ENCODE measurements at regions of chr21 and their contacts with region 1.

Region 1: GRCh38 chr21:44801468-44802395 is at the start of gene UBE2G2:
- DNase-seq: peak; percentile 81 to 91 (median 88)
- H3K4me3 ChIP-seq: peak within 1 kb of the TSS; percentile 48 to 84
- H3K4me3 Mint-ChIP-seq: peak within 1 kb of the TSS; percentile 95 to 100 (median 98)
- H3K27ac ChIP-seq: peak within 1 kb of the TSS; percentile 57
- H3K27ac Mint-ChIP-seq: peak within 1 kb of the TSS; percentile 88 to 99 (median 98)
- H3K4me1 ChIP-seq: peaks cover 30% of the 10 kb centered on the region
- H3K4me1 Mint-ChIP-seq: peaks cover 31 to 49% (median 42%) of the 10 kb centered on the region in 4 donors
- H3K27me3 ChIP-seq: no peaks in the 10 kb centered on the region
- H3K27me3 Mint-ChIP-seq: no peaks in the 10 kb centered on the region
- total RNA-seq, gene UBE2G2: 125 to 131 TPM

Region 2: DNA sequence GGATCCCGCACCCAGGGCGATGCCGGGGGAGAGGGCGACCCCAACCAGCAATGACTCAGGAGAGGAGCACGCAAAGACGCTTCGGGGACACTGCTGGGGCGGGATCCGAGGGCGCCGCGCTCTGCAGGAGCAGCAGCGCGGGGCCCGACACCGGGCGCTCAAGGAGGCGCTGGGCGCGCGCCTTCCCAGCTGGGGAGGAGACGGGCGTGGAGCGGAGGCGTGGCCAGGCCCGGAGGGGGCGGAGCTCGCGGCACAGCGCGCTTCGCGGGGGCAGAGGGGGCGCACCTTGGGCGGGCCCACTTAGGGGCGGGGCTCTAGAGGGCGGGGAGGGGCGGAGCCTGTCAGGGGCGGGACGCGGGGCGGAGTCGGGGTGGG is 15.8 kb after region 1 on chr21:
- CTCF ChIA-PET with region 1: interaction called, 25 read pairs
- POLR2A ChIA-PET with region 1: interaction called, 14 read pairs
- intact Hi-C with region 1: loop called (anchors 1 kb)
- DNase-seq: peak; percentile 89 to 91 (median 91)
- H3K4me3 ChIP-seq: peak overlapping the region in 1 of 2 donors; percentile 57
- H3K4me3 Mint-ChIP-seq: peak overlapping the region; percentile 23 to 80 (median 58)
- H3K27ac ChIP-seq: no peak overlapping the region
- H3K27ac Mint-ChIP-seq: peak overlapping the region in 3 of 7 donors; percentile 17 to 48 (median 31)
- H3K4me1 ChIP-seq: peaks cover 16% of the 10 kb centered on the region
- H3K4me1 Mint-ChIP-seq: peaks cover 1 to 34% (median 16%) of the 10 kb centered on the region in 4 donors
- H3K27me3 ChIP-seq: no peaks in the 10 kb centered on the region
- H3K27me3 Mint-ChIP-seq: no peaks in the 10 kb centered on the region

Region 3: DNA sequence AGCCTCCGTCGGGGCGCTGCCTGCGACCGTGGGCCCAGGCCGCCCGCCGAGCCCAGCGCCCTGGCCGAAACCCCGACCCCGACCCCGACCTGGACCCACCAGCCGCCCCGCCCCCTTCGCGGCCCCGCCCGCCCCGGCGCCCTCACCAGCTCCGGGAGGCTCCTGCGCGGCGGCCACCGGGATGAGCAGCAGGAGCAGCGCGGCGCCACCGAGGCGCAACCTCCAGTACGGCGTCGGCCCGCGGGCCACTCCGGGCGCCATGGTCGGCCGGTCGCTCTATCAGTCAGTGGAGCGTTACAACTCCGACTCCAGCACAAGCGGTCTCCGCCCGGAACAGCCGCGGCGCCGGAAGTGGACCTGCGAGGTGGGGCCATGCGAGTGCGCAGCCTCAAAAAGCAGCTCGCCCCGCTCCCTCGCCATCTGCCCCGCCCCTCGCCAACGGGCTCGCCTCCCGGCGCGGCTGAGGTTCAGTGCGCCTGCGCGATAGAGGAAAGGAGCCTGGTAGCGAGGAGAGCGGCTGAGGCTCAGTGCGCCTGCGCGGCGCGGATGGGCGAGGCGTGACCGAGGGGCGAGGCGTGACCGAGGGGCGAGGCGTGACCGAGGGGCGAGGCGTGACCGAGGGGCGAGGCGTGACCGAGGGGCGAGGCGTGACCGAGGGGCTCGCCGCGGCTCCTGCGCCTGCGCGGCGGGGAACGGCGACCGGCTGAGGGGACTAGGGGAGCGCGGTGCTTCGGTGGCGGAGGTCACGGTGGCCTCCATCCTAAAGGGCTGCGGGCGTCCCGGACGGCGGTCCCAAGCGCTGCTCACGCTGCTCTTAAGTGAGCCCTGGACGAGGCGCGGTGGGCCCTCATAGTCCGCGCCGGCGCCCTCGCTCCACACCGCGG is 71.9 kb after region 1 on chr21 and contains the start of gene PTTG1IP:
- CTCF ChIA-PET with region 1: interaction called, 82 read pairs
- POLR2A ChIA-PET with region 1: interaction called, 82 read pairs
- intact Hi-C with region 1: loop called (anchors 1 kb)
- DNase-seq: peak; percentile 98 to 99 (median 99)
- H3K4me3 ChIP-seq: peak within 1 kb of the TSS; percentile 67 to 70
- H3K4me3 Mint-ChIP-seq: peak within 1 kb of the TSS; percentile 92 to 97 (median 95)
- H3K27ac ChIP-seq: peak within 1 kb of the TSS; percentile 76
- H3K27ac Mint-ChIP-seq: peak within 1 kb of the TSS; percentile 92 to 98 (median 97)
- H3K4me1 ChIP-seq: peaks cover 55% of the 10 kb centered on the region
- H3K4me1 Mint-ChIP-seq: peaks cover 37 to 59% (median 48%) of the 10 kb centered on the region in 4 donors
- H3K27me3 ChIP-seq: no peaks in the 10 kb centered on the region
- H3K27me3 Mint-ChIP-seq: no peaks in the 10 kb centered on the region
- total RNA-seq, gene PTTG1IP: 98.7 to 110 TPM

Region 4: GRCh38 chr21:44892536-44893277 is 91.0 kb after region 1 on chr21:
- CTCF ChIA-PET with region 1: interaction called, 13 read pairs
- POLR2A ChIA-PET with region 1: interaction called, 4 read pairs
- intact Hi-C with region 1: loop called (anchors 1 kb)
- DNase-seq: peak; percentile 64 to 80 (median 76)
- H3K4me3 ChIP-seq: no peak overlapping the region
- H3K4me3 Mint-ChIP-seq: peak overlapping the region in 1 of 8 donors; percentile 35
- H3K27ac ChIP-seq: no peak overlapping the region
- H3K27ac Mint-ChIP-seq: peak overlapping the region in 6 of 7 donors; percentile 64 to 92 (median 85)
- H3K4me1 ChIP-seq: peaks cover 19% of the 10 kb centered on the region
- H3K4me1 Mint-ChIP-seq: peaks cover 10 to 29% (median 14%) of the 10 kb centered on the region in 4 donors
- H3K27me3 ChIP-seq: no peaks in the 10 kb centered on the region
- H3K27me3 Mint-ChIP-seq: no peaks in the 10 kb centered on the region

Region 5: DNA sequence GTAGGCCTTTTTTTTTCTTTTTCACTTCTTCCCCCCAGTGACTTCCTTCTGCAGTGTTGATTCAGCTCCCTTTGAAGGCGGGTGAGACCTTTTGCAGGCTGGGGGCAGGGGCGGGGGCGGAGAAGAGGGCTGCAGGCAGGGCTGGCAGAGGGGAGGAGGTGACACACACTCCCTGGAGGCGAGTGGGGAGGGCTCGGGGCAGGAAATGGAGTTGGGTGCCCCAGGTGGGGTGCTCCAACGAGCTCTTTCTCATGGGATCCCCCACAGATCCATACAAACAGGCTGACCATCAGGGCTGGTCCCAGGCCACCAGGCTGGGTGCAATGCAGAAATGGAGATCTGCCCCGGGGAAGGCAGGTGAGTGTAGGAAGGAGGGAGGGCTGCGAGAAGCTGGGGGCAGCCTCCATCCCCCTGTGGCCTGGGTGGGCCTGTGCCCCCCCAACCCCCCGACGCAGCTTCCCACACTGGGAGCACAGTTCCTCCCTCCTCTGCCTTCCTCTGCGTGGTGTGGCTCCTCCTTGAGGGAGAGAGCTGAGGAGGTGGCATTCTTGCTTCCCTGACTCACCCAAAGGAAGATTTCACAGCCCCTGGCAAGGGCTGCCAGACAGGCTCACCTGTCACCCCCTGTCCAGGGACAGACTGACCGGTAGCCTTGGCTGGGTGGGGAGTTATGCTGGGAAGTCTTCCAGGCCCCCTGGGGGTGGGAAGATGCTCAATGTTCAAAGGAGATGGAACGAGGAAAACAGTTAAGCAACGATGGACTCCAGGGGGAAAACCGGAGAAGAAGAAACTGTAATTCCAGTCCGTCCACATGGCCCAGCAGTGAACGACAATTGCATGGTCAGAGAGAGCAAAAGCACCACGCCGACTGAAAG is 126.1 kb after region 1 on chr21:
- CTCF ChIA-PET with region 1: interaction called, 67 read pairs
- POLR2A ChIA-PET with region 1: interaction called, 53 read pairs
- intact Hi-C with region 1: loop called (anchors 1 kb)
- DNase-seq: peak; percentile 77 to 96 (median 82)
- H3K4me3 ChIP-seq: peak overlapping the region; percentile 66 to 88
- H3K4me3 Mint-ChIP-seq: peak overlapping the region; percentile 85 to 97 (median 94)
- H3K27ac ChIP-seq: peak overlapping the region; percentile 84
- H3K27ac Mint-ChIP-seq: peak overlapping the region; percentile 93 to 99 (median 95)
- H3K4me1 ChIP-seq: peaks cover 86% of the 10 kb centered on the region
- H3K4me1 Mint-ChIP-seq: peaks cover 56 to 84% (median 72%) of the 10 kb centered on the region in 4 donors
- H3K27me3 ChIP-seq: no peaks in the 10 kb centered on the region
- H3K27me3 Mint-ChIP-seq: no peaks in the 10 kb centered on the region

Region 6: GRCh38 chr21:45074048-45074817 is 272.5 kb after region 1 on chr21 and contains the start of gene ADARB1:
- CTCF ChIA-PET with region 1: no interaction called
- POLR2A ChIA-PET with region 1: no interaction called
- intact Hi-C with region 1: loop called (anchors 10 kb)
- DNase-seq: peak in 4 of 5 donors; percentile 65 to 79 (median 72)
- H3K4me3 ChIP-seq: peak within 1 kb of the TSS; percentile 18 to 52
- H3K4me3 Mint-ChIP-seq: peak within 1 kb of the TSS; percentile 92 to 99 (median 96)
- H3K27ac ChIP-seq: peak within 1 kb of the TSS; percentile 64
- H3K27ac Mint-ChIP-seq: peak within 1 kb of the TSS; percentile 92 to 99 (median 97)
- H3K4me1 ChIP-seq: peaks cover 44% of the 10 kb centered on the region
- H3K4me1 Mint-ChIP-seq: peaks cover 33 to 46% (median 39%) of the 10 kb centered on the region in 4 donors
- H3K27me3 ChIP-seq: no peaks in the 10 kb centered on the region
- H3K27me3 Mint-ChIP-seq: no peaks in the 10 kb centered on the region
- total RNA-seq, gene ADARB1: 49.7 to 50.0 TPM

Measured in CD4-positive, alpha-beta memory T cell (primary cell).